ENCODE measurements at regions of chr1 and their contacts with region 1.

Region 1: DNA sequence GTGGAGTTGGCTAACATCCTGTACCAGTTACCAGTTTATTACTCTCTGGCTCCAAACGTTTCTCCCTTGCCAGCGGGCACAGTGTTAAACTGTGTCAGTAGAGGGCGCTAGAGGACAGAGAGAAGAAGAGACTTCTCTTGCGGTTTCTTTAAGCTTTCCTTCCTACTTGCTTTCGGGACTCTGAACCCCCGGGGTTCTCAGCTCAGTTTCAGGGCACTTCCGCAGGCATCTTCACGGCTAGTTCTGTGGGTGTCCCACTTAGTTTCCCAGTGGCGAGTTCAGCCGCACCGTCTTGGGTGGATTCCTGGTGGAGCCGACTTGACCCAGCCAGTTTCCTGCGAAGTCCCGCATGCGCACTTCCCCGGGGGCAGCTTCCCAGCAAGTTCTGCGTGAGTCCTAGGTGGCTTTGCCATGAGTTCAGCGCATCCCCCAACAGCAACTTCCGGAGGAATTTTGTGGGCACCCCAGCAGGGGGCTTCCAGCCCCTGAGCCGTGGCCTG is 37.9 kb upstream of the BTG2 start:
- DNase-seq: peak; percentile 83 to 88 (median 85)
- H3K4me3 ChIP-seq: peak overlapping the region; percentile 64 to 85
- H3K4me3 Mint-ChIP-seq: peak overlapping the region; percentile 84 to 92 (median 89)
- H3K27ac ChIP-seq: peak overlapping the region; percentile 75
- H3K27ac Mint-ChIP-seq: peak overlapping the region; percentile 79 to 96 (median 93)
- H3K4me1 ChIP-seq: peaks cover 32% of the 10 kb centered on the region
- H3K4me1 Mint-ChIP-seq: peaks cover 11 to 26% (median 22%) of the 10 kb centered on the region in 4 donors
- H3K27me3 ChIP-seq: no peaks in the 10 kb centered on the region
- H3K27me3 Mint-ChIP-seq: peaks cover 1 to 2% of the 10 kb centered on the region in 2 donors

Region 2: DNA sequence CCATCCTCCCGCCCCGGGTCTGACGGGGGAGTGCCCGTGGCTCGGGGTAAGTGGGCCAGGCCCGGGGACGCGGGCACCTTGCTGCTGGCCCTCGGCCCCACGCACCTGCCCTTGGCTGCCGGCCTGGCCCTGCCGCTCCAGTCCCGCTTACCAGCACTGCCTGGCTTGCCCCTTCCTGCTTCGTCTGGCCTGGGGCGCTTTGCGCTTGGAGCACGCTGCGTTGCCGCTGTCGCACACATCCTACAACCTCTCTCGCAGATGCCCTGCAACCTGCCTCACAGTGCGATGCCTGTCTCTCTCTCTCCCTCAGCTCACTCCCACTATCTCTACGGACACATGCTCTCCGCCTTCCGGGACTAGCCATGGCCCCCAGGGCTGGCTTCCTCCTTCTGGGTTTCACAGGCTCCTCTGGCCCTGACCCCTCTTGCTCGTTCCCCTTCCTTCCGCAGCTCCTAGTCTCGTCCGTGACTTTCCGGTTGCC is 191.3 kb before region 1 on chr1:
- CTCF ChIA-PET with region 1: no interaction called
- POLR2A ChIA-PET with region 1: no interaction called
- intact Hi-C with region 1: no loop called
- DNase-seq: no peak
- H3K4me3 ChIP-seq: no peak overlapping the region
- H3K4me3 Mint-ChIP-seq: peak overlapping the region in 7 of 8 donors; percentile 20 to 87 (median 59)
- H3K27ac ChIP-seq: no peak overlapping the region
- H3K27ac Mint-ChIP-seq: peak overlapping the region in 1 of 7 donors; percentile 27
- H3K4me1 ChIP-seq: peaks cover 8% of the 10 kb centered on the region
- H3K4me1 Mint-ChIP-seq: peaks cover 4 to 12% (median 4%) of the 10 kb centered on the region in 4 donors
- H3K27me3 ChIP-seq: peaks cover 7% of the 10 kb centered on the region
- H3K27me3 Mint-ChIP-seq: peaks cover 27 to 52% of the 10 kb centered on the region in 2 donors

Region 3: GRCh38 chr1:203216274-203217138 is 50.9 kb before region 1 on chr1:
- CTCF ChIA-PET with region 1: interaction called, 10 read pairs
- POLR2A ChIA-PET with region 1: no interaction called
- intact Hi-C with region 1: no loop called
- DNase-seq: peak; percentile 48 to 56 (median 50)
- H3K4me3 ChIP-seq: no peak overlapping the region
- H3K4me3 Mint-ChIP-seq: peak overlapping the region in 1 of 8 donors; percentile 18
- H3K27ac ChIP-seq: no peak overlapping the region
- H3K27ac Mint-ChIP-seq: peak overlapping the region in 2 of 7 donors; percentile 54 to 60
- H3K4me1 ChIP-seq: no peaks in the 10 kb centered on the region
- H3K4me1 Mint-ChIP-seq: peaks cover 0 to 9% (median 5%) of the 10 kb centered on the region in 4 donors
- H3K27me3 ChIP-seq: no peaks in the 10 kb centered on the region
- H3K27me3 Mint-ChIP-seq: peaks cover 8 to 10% of the 10 kb centered on the region in 2 donors

Region 4: DNA sequence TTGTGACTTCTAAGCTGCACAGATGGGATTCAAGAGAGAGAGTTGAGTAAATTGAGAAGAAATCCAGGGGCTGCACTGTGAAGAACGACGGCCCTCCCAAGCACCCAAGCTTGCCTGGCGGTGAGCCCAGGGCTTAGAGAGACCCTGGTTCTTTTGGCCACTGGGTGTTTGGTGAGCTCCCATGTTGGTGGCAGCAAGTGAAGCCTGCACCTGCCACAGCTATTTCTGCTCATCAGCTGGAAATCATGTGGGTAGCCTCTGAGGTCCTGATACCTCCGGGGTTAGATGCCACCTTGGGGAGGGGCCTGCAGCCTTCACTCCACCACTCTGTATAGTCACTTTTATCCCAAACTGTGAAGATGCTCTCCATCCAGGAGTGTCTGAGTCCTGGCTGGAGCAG is 31.8 kb after region 1 on chr1:
- CTCF ChIA-PET with region 1: interaction called, 16 read pairs
- POLR2A ChIA-PET with region 1: interaction called, 3 read pairs
- intact Hi-C with region 1: no loop called
- DNase-seq: no peak
- H3K4me3 ChIP-seq: no peak overlapping the region
- H3K4me3 Mint-ChIP-seq: no peak overlapping the region
- H3K27ac ChIP-seq: no peak overlapping the region
- H3K27ac Mint-ChIP-seq: peak overlapping the region in 1 of 7 donors; percentile 21
- H3K4me1 ChIP-seq: peaks cover 14% of the 10 kb centered on the region
- H3K4me1 Mint-ChIP-seq: peaks cover 17 to 38% (median 29%) of the 10 kb centered on the region in 4 donors
- H3K27me3 ChIP-seq: no peaks in the 10 kb centered on the region
- H3K27me3 Mint-ChIP-seq: no peaks in the 10 kb centered on the region

Region 5: GRCh38 chr1:203326830-203327683 is 59.7 kb after region 1 on chr1:
- CTCF ChIA-PET with region 1: interaction called, 921 read pairs
- POLR2A ChIA-PET with region 1: interaction called, 877 read pairs
- intact Hi-C with region 1: no loop called
- DNase-seq: peak; percentile 95 to 96 (median 95)
- H3K4me3 ChIP-seq: peak overlapping the region; percentile 15 to 64
- H3K4me3 Mint-ChIP-seq: peak overlapping the region; percentile 79 to 91 (median 86)
- H3K27ac ChIP-seq: peak overlapping the region; percentile 97
- H3K27ac Mint-ChIP-seq: peak overlapping the region; percentile 91 to 99 (median 98)
- H3K4me1 ChIP-seq: peaks cover 64% of the 10 kb centered on the region
- H3K4me1 Mint-ChIP-seq: peaks cover 49 to 73% (median 60%) of the 10 kb centered on the region in 4 donors
- H3K27me3 ChIP-seq: no peaks in the 10 kb centered on the region
- H3K27me3 Mint-ChIP-seq: no peaks in the 10 kb centered on the region

Region 6: DNA sequence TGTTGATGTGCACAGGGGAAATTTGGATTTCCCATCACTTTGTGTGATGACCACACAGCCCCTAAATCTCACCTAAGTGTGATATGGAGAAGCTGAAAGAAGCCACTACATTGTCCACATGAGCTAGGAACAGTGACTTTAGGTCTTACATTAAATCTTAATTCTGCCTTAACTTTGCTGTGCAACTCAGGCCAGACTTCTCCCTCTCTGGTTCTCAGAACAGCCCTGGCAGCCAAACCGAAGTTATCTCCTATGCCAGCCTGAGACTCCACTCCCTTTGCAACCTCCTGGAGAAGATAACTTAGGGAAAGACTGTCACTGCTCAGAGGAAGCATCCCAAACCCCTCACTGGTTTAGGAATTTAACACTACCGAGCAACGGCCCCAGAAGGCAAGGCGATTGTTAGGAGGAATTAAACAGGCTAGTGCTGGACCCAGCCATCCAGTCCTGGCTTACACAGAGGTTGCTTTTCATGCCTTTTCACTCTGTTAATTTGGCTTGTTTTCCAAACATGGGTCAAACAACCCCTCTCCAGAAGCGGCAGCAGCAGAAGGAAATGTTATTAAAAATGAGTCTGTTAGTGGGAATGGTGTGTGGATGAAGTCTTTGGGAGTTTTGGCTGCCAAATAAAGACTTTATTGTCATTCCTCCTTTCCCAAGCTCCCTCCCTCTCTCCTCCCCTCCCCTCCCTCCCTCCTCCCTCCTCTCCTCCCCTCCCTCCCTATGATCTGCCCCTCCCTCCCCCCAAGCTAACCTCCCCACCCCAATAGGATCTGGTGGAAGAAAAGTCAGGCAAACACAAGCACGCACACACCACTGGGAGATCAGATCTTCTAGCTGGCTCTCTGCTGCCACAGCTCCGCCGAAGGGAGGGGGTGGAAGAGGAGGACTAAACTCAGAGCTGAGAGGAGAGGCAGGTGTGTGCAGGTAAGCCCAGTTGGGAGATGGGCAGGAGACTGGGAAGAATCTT is 207.9 kb after region 1 on chr1 and contains the start of gene PRELP:
- CTCF ChIA-PET with region 1: interaction called, 424 read pairs
- POLR2A ChIA-PET with region 1: no interaction called
- intact Hi-C with region 1: no loop called
- DNase-seq: no peak
- H3K4me3 ChIP-seq: no peak within 1 kb of the TSS
- H3K4me3 Mint-ChIP-seq: no peak within 1 kb of the TSS
- H3K27ac ChIP-seq: no peak within 1 kb of the TSS
- H3K27ac Mint-ChIP-seq: peak within 1 kb of the TSS in 1 of 7 donors; percentile 53
- H3K4me1 ChIP-seq: peaks cover under 1% of the 10 kb centered on the region
- H3K4me1 Mint-ChIP-seq: peaks cover 0 to 1% (median under 1%) of the 10 kb centered on the region in 4 donors
- H3K27me3 ChIP-seq: peaks cover 9% of the 10 kb centered on the region
- H3K27me3 Mint-ChIP-seq: peaks cover 11 to 31% of the 10 kb centered on the region in 2 donors
- total RNA-seq, gene PRELP: not detected

Region 7: GRCh38 chr1:203504397-203505250 is 237.2 kb after region 1 on chr1:
- CTCF ChIA-PET with region 1: interaction called, 29 read pairs
- POLR2A ChIA-PET with region 1: interaction called, 5 read pairs
- intact Hi-C with region 1: no loop called
- DNase-seq: peak; percentile 60 to 70 (median 63)
- H3K4me3 ChIP-seq: no peak overlapping the region
- H3K4me3 Mint-ChIP-seq: no peak overlapping the region
- H3K27ac ChIP-seq: no peak overlapping the region
- H3K27ac Mint-ChIP-seq: peak overlapping the region in 1 of 7 donors; percentile 3
- H3K4me1 ChIP-seq: no peaks in the 10 kb centered on the region
- H3K4me1 Mint-ChIP-seq: peaks cover 0 to 7% (median 4%) of the 10 kb centered on the region in 4 donors
- H3K27me3 ChIP-seq: no peaks in the 10 kb centered on the region
- H3K27me3 Mint-ChIP-seq: no peaks in the 10 kb centered on the region

Region 8: DNA sequence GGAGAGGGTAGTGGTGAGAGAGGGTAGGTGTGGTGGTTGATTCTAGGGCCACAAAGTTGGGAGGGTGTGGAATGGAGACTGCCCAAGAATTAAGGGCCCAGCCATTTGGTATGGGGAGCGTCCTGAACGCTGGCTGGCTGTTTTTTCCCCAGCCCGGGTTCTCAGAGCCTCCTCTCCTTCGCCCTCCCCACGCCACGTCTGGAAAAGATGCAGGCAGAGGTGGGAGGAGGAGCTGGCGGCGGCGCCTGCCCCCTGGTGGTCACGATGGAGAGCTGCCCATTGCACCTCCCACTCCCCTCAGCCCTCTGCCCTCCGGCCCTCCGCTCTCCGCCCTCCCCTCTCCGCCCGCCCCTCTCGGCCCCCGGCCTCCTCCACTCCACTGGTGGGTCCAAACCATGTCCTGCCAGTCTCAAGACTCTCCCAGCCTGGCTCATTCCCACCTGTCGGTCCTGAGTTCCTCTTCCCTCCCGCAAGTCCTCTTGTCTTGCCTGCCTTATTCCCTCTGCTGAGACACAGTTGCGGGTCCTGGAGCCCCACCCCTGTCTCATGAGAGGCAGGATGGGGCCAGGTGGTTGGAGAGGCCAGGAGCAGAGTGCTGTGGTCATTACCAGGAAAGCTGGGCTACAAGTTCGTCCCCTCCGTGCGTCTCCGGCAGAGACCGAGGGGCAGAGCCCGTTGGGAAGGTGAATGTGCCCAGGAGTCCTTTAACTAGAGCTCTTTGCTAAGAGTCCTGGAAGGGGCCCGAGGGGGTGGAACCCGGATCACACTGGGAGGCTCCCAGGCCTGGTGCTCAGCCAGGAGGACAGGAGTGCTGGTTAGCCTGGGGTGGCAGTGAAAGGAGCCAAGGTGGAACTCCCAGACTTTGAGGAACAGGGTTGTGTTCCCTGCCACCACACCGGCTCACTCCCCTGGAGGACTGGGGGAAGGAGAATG is 861.8 kb after region 1 on chr1:
- CTCF ChIA-PET with region 1: no interaction called
- POLR2A ChIA-PET with region 1: no interaction called
- intact Hi-C with region 1: loop called (anchors 5 kb)
- DNase-seq: peak; percentile 55 to 65 (median 59)
- H3K4me3 ChIP-seq: no peak overlapping the region
- H3K4me3 Mint-ChIP-seq: peak overlapping the region in 2 of 8 donors; percentile 36 to 46
- H3K27ac ChIP-seq: no peak overlapping the region
- H3K27ac Mint-ChIP-seq: peak overlapping the region in 4 of 7 donors; percentile 27 to 75 (median 44)
- H3K4me1 ChIP-seq: peaks cover 9% of the 10 kb centered on the region
- H3K4me1 Mint-ChIP-seq: peaks cover 5 to 14% (median 10%) of the 10 kb centered on the region in 4 donors
- H3K27me3 ChIP-seq: no peaks in the 10 kb centered on the region
- H3K27me3 Mint-ChIP-seq: peaks cover 0 to 1% of the 10 kb centered on the region in 2 donors

Measured in CD4-positive, alpha-beta memory T cell (primary cell).